ENCODE measurements at regions of chr3 and their contacts with region 1.

Region 1: DNA sequence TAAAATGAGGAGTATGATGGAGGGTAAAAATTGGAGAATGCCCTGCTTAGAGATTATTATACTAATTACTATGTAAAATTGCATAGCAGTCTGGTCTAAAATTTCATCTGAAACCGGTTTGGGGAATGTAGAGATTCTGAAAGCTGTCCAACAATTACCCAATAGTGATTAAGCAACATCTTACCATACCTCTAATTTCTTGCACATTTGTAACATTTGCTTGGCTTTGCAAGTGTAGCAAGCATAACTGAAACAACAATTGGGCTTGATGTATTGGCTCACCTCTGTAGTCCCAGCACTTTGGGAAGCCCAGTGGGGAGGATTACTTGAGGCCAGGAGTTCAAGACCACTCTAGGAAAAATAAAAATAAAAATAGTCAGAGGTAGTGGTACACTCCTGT is 17.4 kb downstream of the AADACL2 start:
- DNase-seq: peak; percentile 36
- ATAC-seq: no peak; the same call in 1 of the 2 replicates
- H3K4me3 ChIP-seq: no peak overlapping the region
- H3K27ac ChIP-seq: no peak overlapping the region
- H3K4me1 ChIP-seq: no peaks in the 10 kb centered on the region
- H3K27me3 ChIP-seq: no peaks in the 10 kb centered on the region
- CTCF ChIP-seq: no peak
- POLR2A ChIP-seq: no peak
- RAD21 ChIP-seq: no peak

Region 2: DNA sequence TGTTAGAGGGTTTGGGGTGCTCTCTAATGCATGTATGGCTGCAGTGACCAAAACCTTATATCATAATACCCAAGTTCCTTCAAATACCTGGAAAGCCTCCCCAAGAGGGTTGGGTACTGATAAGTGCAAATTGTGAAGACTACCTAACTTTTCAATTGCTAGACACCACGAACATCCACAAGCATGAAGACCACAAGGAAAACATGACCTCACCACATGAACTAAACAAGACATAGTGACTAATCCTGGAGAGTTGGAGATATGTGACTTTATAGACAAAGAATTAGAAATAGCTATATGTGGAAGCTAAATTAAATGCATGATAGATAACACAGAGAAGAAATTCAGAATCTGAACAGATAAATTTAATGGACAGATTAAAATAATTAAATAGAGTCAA is 41.3 kb before region 1 on chr3:
- CTCF ChIA-PET with region 1: no interaction called
- POLR2A ChIA-PET with region 1: no interaction called
- dilution Hi-C with region 1: no loop called
- in situ Hi-C with region 1: no loop called
- intact Hi-C with region 1: loop called (anchors 5 kb)
- DNase-seq: peak; percentile 85
- ATAC-seq: peak; percentile 79
- H3K4me3 ChIP-seq: no peak overlapping the region
- H3K27ac ChIP-seq: no peak overlapping the region
- H3K4me1 ChIP-seq: peaks cover 4% of the 10 kb centered on the region; the same call in 1 of the 2 replicates
- H3K27me3 ChIP-seq: no peaks in the 10 kb centered on the region
- CTCF ChIP-seq: no peak
- POLR2A ChIP-seq: no peak
- RAD21 ChIP-seq: no peak

Region 3: GRCh38 chr3:151818360-151818759 is 67.2 kb after region 1 on chr3:
- CTCF ChIA-PET with region 1: no interaction called
- POLR2A ChIA-PET with region 1: no interaction called
- dilution Hi-C with region 1: no loop called
- in situ Hi-C with region 1: no loop called
- intact Hi-C with region 1: no loop called
- DNase-seq: no peak
- ATAC-seq: no peak
- H3K4me3 ChIP-seq: no peak overlapping the region
- H3K27ac ChIP-seq: no peak overlapping the region
- H3K4me1 ChIP-seq: no peaks in the 10 kb centered on the region
- H3K27me3 ChIP-seq: no peaks in the 10 kb centered on the region
- CTCF ChIP-seq: no peak
- POLR2A ChIP-seq: no peak
- RAD21 ChIP-seq: no peak

Region 4: GRCh38 chr3:151949706-151950105 is 198.5 kb after region 1 on chr3:
- CTCF ChIA-PET with region 1: no interaction called
- POLR2A ChIA-PET with region 1: no interaction called
- dilution Hi-C with region 1: no loop called
- in situ Hi-C with region 1: no loop called
- intact Hi-C with region 1: no loop called
- DNase-seq: no peak
- ATAC-seq: no peak
- H3K4me3 ChIP-seq: no peak overlapping the region
- H3K27ac ChIP-seq: no peak overlapping the region
- H3K4me1 ChIP-seq: peaks cover 1% of the 10 kb centered on the region
- H3K27me3 ChIP-seq: no peaks in the 10 kb centered on the region; the same call in 1 of the 2 replicates
- CTCF ChIP-seq: no peak
- POLR2A ChIP-seq: no peak
- RAD21 ChIP-seq: no peak

Region 5: DNA sequence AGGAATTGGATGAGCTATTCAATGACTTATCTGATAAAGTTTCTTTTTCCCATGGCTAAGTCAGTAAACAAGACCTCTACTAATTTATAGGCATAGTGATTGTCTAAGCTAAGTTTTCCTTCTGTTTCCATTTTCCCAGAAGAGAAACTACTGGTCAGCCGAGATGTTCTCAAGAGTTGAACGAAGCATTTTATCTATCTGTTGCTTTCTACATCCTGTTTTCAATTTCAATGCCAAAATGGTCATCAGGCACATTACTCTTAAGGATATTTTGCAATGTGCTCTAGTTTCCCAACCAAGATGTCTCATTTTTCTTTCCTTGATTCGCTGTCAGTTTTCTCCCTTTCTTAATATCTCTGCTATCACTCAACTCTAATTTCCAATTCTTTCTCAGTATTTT is 746.3 kb after region 1 on chr3:
- CTCF ChIA-PET with region 1: no interaction called
- POLR2A ChIA-PET with region 1: no interaction called
- dilution Hi-C with region 1: no loop called
- in situ Hi-C with region 1: no loop called
- intact Hi-C with region 1: no loop called
- DNase-seq: peak; percentile 24
- ATAC-seq: peak; percentile 35
- H3K4me3 ChIP-seq: no peak overlapping the region
- H3K27ac ChIP-seq: no peak overlapping the region
- H3K4me1 ChIP-seq: no peaks in the 10 kb centered on the region
- H3K27me3 ChIP-seq: no peaks in the 10 kb centered on the region
- CTCF ChIP-seq: no peak
- POLR2A ChIP-seq: no peak
- RAD21 ChIP-seq: no peak

Measured in IMR-90 (cell line).